Activated CD4-positive, alpha-beta T cell treated with anti-CD3 and anti-CD28 coated beads for 36 hours (primary cell): ENCODE measurements at regions of chr1 and their contacts with region 1.

Region 1: GRCh38 chr1:228457396-228458176 is 29.6 kb upstream of the RNF187 start:
- DNase-seq: peak; percentile 92
- ATAC-seq: peak; percentile 89
- H3K4me3 Mint-ChIP-seq: peak overlapping the region; percentile 88
- H3K27ac Mint-ChIP-seq: peak overlapping the region; percentile 96
- H3K4me1 Mint-ChIP-seq: peaks cover 30% of the 10 kb centered on the region
- H3K27me3 Mint-ChIP-seq: no peaks in the 10 kb centered on the region

Region 2: DNA sequence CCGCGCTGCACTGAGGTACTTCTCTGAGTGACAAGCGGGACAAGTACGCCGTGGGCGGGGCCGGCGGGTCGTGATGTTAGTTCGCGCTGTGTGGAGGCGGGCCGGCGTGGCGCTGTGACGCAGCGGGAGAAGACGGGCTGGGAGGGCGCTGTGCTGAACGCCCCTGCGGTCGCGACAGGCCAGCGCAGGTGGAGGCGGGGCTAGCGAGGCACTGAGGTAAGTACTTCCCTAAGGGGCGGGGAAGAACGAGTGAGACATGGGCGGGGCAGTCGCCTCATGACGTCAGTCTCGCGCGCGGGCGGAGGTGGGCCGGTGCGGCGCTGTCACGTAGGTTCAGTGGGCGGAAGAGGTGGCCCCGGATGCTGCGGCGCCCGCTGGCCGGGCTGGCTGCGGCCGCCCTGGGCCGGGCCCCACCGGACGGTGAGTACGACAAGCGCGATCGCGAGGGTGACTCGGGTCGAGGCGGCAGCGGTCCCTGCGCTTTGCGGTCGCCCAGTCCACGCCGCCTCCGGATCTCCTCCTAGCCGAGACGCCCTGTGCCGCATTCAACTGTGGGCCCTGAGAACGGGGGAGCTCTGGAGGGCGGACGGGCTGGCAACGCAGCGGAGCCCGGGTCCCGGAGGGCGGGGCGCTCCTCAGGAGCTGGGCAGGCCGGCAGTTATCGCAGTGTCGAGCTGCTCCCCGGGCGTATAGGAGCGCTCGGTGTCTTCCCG is 317.5 kb before region 1 on chr1 and contains the start of gene GUK1:
- CTCF ChIA-PET with region 1: no interaction called
- POLR2A ChIA-PET with region 1: no interaction called
- intact Hi-C with region 1: loop called (anchors 1 kb)
- DNase-seq: peak; percentile 100
- ATAC-seq: peak; percentile 95
- H3K4me3 Mint-ChIP-seq: peak within 1 kb of the TSS; percentile 97
- H3K27ac Mint-ChIP-seq: peak within 1 kb of the TSS; percentile 98
- H3K4me1 Mint-ChIP-seq: peaks cover 24% of the 10 kb centered on the region
- H3K27me3 Mint-ChIP-seq: peaks cover 2% of the 10 kb centered on the region
- total RNA-seq, gene GUK1: 196 to 270 TPM

Region 3: DNA sequence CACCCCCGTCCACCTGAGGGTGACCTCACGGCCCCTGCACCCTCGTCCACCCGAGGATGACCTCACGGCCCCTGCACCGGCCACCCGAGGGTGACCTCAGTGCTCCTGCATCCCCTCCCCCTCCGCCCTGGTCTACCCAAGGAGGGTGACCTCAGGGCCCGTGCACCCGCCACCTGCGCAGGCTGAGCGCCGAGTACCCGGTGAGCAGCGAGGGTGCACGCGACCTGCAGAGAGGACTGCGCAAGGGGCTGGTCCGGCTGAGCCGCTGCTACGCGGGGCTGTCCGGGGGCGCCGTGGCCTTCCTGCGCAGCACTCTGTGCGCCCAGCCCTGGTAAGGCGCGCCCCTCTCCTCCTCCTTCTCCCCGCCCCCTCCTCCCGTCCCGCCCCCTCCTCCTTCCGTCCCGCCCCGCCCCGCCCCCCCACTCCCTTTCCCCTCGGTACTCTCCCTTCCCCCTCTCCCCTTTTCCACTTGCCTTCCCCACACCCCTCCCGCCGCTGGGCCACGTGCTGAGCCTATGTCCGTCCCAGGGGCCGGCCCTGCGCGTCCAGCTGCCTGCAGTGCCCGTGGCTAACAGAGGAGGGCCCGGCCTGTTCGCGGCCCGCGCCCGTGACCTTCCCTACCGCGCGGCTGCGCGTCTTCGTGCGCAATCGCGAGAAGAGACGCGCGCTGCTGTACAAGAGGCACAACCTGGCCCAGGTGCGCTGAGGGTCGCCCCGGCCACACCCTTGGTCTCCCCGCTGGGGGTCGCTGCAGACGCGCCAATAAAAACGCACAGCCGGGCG is 79.3 kb before region 1 on chr1:
- CTCF ChIA-PET with region 1: interaction called, 3 read pairs
- POLR2A ChIA-PET with region 1: interaction called, 3 read pairs
- intact Hi-C with region 1: loop called in 1 of 2 experiments (anchors 2 kb)
- DNase-seq: peak; percentile 84
- ATAC-seq: peak; percentile 77
- H3K4me3 Mint-ChIP-seq: peak overlapping the region; percentile 73
- H3K27ac Mint-ChIP-seq: no peak overlapping the region
- H3K4me1 Mint-ChIP-seq: peaks cover 8% of the 10 kb centered on the region
- H3K27me3 Mint-ChIP-seq: peaks cover 10% of the 10 kb centered on the region

Region 4: DNA sequence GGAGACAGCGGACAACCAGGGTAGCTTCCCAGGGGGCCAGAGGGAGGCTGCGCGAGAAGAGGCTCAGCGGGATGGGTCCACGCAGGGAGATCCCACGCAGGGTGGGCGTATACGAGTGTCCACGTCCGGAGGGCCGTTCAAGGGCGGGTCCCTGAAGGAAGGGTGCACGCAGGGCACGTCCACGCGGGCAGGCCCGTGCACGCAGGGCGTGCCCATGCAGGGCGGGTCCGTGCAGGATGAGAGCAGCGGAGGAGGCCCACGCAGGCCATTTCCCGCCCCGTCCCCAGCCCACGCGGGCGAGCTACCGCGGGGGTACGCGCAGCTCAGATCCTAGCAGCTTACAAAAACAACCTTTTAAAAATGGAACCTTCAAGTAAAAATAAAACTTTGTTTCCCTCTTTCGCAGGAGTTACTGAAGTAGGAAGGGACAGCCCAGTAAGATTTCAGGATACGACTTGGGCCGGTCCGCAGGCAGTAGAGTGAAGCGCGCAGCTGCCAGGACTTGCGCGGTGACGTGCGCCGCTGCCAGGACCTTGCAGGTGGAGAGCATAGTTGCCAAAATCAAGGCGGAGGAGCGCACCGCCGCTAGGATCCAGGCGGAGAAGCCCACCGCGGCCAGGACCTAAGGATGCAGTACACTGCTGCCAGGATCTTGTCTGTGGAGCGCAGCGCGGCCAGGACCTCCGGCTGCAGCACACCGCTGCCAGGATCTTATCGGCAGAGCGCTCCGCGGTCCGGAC is 29.2 kb after region 1 on chr1:
- CTCF ChIA-PET with region 1: interaction called, 12 read pairs
- POLR2A ChIA-PET with region 1: interaction called, 8 read pairs
- intact Hi-C with region 1: loop called (anchors 1 kb)
- DNase-seq: peak; percentile 87
- ATAC-seq: peak; percentile 66
- H3K4me3 Mint-ChIP-seq: peak overlapping the region; percentile 96
- H3K27ac Mint-ChIP-seq: peak overlapping the region; percentile 99
- H3K4me1 Mint-ChIP-seq: peaks cover 40% of the 10 kb centered on the region
- H3K27me3 Mint-ChIP-seq: no peaks in the 10 kb centered on the region